ENCODE measurements at regions of chr1 and their contacts with region 1.

Region 1: GRCh38 chr1:207868774-207869721 is 41.9 kb downstream of the CD34 start:
- DNase-seq: peak; percentile 89
- H3K4me3 Mint-ChIP-seq: peak overlapping the region; percentile 84
- H3K27ac Mint-ChIP-seq: peak overlapping the region; percentile 32
- H3K4me1 Mint-ChIP-seq: peaks cover 29% of the 10 kb centered on the region
- H3K27me3 Mint-ChIP-seq: no peaks in the 10 kb centered on the region
- CTCF ChIP-seq: peak; percentile 99

Region 2: GRCh38 chr1:206895830-206896242 is 973.2 kb before region 1 on chr1:
- CTCF ChIA-PET with region 1: no interaction called
- POLR2A ChIA-PET with region 1: no interaction called
- intact Hi-C with region 1: no loop called
- DNase-seq: peak; percentile 99
- H3K4me3 Mint-ChIP-seq: peak overlapping the region; percentile 2
- H3K27ac Mint-ChIP-seq: peak overlapping the region; percentile 89
- H3K4me1 Mint-ChIP-seq: peaks cover 71% of the 10 kb centered on the region
- H3K27me3 Mint-ChIP-seq: no peaks in the 10 kb centered on the region
- CTCF ChIP-seq: no peak

Region 3: GRCh38 chr1:207751790-207752455 is 117.1 kb before region 1 on chr1 and contains the start of gene CD46:
- CTCF ChIA-PET with region 1: interaction called, 3 read pairs
- POLR2A ChIA-PET with region 1: interaction called, 15 read pairs
- intact Hi-C with region 1: no loop called
- DNase-seq: peak; percentile 100
- H3K4me3 Mint-ChIP-seq: peak within 1 kb of the TSS; percentile 99
- H3K27ac Mint-ChIP-seq: peak within 1 kb of the TSS; percentile 96
- H3K4me1 Mint-ChIP-seq: peaks cover 63% of the 10 kb centered on the region
- H3K27me3 Mint-ChIP-seq: no peaks in the 10 kb centered on the region
- CTCF ChIP-seq: no peak
- total RNA-seq, gene CD46: 181 and 184 TPM in 2 replicates

Region 4: GRCh38 chr1:207811920-207812720 is 56.9 kb before region 1 on chr1:
- CTCF ChIA-PET with region 1: interaction called, 790 read pairs
- POLR2A ChIA-PET with region 1: interaction called, 30 read pairs
- intact Hi-C with region 1: no loop called
- DNase-seq: peak; percentile 54
- H3K4me3 Mint-ChIP-seq: no peak overlapping the region
- H3K27ac Mint-ChIP-seq: peak overlapping the region; percentile 68
- H3K4me1 Mint-ChIP-seq: peaks cover 75% of the 10 kb centered on the region
- H3K27me3 Mint-ChIP-seq: no peaks in the 10 kb centered on the region
- CTCF ChIP-seq: peak; percentile 40

Region 5: DNA sequence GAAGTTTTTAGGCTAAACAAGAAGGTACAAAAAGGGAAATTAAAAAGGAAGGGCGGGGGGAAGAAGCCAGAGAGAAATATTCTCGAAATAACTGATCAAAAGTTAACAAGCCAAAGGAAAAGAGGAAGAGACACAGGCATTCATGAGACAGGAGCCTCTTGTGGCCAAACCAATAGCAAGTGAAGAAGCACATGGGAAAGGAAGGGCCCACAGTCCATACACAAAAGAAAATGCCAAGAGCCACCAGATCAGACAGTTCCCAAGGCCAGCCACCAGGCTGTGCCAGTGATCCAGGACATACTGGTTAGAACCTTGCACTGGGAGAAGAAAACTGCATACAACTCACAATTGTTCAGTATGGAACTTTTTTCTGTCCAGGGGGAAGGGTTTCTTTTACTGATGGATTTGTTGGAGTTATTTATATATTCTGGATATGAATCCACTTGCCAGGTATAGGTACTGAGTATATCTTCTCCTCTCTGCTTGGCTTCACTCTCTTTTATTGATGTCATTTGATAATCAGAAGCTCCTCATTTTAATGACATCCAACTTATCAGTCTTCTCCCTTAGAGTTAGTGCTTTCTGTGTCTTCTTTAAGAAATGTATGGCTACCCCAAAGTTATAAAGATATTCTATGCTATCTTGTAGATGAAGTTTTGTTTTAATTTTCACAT is 40.4 kb before region 1 on chr1:
- CTCF ChIA-PET with region 1: interaction called, 790 read pairs
- POLR2A ChIA-PET with region 1: interaction called, 372 read pairs
- intact Hi-C with region 1: loop called (anchors 1 kb)
- DNase-seq: peak; percentile 96
- H3K4me3 Mint-ChIP-seq: no peak overlapping the region
- H3K27ac Mint-ChIP-seq: peak overlapping the region; percentile 96
- H3K4me1 Mint-ChIP-seq: peaks cover 78% of the 10 kb centered on the region
- H3K27me3 Mint-ChIP-seq: no peaks in the 10 kb centered on the region
- CTCF ChIP-seq: peak; percentile 99

Region 6: GRCh38 chr1:207848234-207848633 is 20.8 kb before region 1 on chr1:
- CTCF ChIA-PET with region 1: interaction called, 790 read pairs
- POLR2A ChIA-PET with region 1: interaction called, 110 read pairs
- intact Hi-C with region 1: loop called (anchors 1 kb)
- DNase-seq: peak; percentile 94
- H3K4me3 Mint-ChIP-seq: peak overlapping the region; percentile 62
- H3K27ac Mint-ChIP-seq: peak overlapping the region; percentile 94
- H3K4me1 Mint-ChIP-seq: peaks cover 73% of the 10 kb centered on the region
- H3K27me3 Mint-ChIP-seq: no peaks in the 10 kb centered on the region
- CTCF ChIP-seq: no peak

Region 7: DNA sequence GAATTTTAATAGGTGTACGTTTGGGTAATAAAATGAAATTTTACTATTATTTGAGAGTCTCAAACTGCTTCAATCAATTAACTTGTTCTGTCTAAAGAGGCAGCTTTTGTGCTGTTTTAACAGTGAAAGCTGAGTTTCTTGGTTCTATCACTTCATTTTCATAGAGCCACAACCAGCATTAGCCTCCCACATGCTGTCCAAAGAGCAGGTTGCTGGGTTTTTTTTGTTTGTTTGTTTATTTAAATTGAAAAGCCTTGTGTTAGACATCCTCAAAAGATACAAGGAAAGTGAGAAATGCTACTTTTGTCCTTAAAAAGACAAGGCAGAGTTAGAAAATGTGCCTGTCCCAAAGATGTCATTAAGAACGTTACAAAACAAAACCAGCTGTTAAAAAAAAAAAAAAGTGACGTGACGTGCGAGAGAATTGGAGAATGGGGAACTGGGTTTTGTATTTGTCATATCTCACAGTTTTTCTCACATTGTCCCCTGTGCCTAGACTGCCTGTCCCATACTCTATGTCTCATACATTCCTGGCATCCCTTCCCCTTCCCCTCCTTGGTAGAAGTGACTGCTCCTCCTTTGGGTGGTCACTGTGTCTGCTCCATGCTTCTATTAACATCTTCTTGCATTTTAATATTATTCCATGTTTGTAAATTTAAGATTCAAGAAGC is 105.0 kb after region 1 on chr1:
- CTCF ChIA-PET with region 1: interaction called, 10 read pairs
- POLR2A ChIA-PET with region 1: no interaction called
- intact Hi-C with region 1: no loop called
- DNase-seq: no peak
- H3K4me3 Mint-ChIP-seq: no peak overlapping the region
- H3K27ac Mint-ChIP-seq: no peak overlapping the region
- H3K4me1 Mint-ChIP-seq: no peaks in the 10 kb centered on the region
- H3K27me3 Mint-ChIP-seq: peaks cover 42% of the 10 kb centered on the region
- CTCF ChIP-seq: no peak